Endothelial cell of umbilical vein (primary cell): ENCODE measurements at regions of chr5 and their contacts with region 1.

Region 1: GRCh38 chr5:127011961-127012644 is 18.3 kb downstream of the MARCHF3 start:
- DNase-seq: peak; percentile 43
- H3K4me3 ChIP-seq: no peak overlapping the region
- H3K27ac ChIP-seq: peak overlapping the region; percentile 83
- H3K4me1 ChIP-seq: peaks cover 40% of the 10 kb centered on the region
- H3K27me3 ChIP-seq: no peaks in the 10 kb centered on the region
- CTCF ChIP-seq: no peak
- POLR2A ChIP-seq: no peak

Region 2: GRCh38 chr5:126917918-126918614 is 94.0 kb before region 1 on chr5:
- CTCF ChIA-PET with region 1: no interaction called
- POLR2A ChIA-PET with region 1: no interaction called
- dilution Hi-C with region 1: no loop called
- intact Hi-C with region 1: loop called (anchors 5 kb)
- DNase-seq: peak; percentile 16
- H3K4me3 ChIP-seq: no peak overlapping the region
- H3K27ac ChIP-seq: peak overlapping the region; percentile 5
- H3K4me1 ChIP-seq: peaks cover 21% of the 10 kb centered on the region
- H3K27me3 ChIP-seq: no peaks in the 10 kb centered on the region
- CTCF ChIP-seq: no peak
- POLR2A ChIP-seq: no peak

Region 3: GRCh38 chr5:126972062-126972895 is 39.8 kb before region 1 on chr5:
- CTCF ChIA-PET with region 1: interaction called, 3 read pairs
- POLR2A ChIA-PET with region 1: no interaction called
- dilution Hi-C with region 1: no loop called
- intact Hi-C with region 1: loop called (anchors 1 kb)
- DNase-seq: peak; percentile 42
- H3K4me3 ChIP-seq: no peak overlapping the region
- H3K27ac ChIP-seq: no peak overlapping the region
- H3K4me1 ChIP-seq: peaks cover 27% of the 10 kb centered on the region
- H3K27me3 ChIP-seq: no peaks in the 10 kb centered on the region
- CTCF ChIP-seq: no peak
- POLR2A ChIP-seq: no peak

Region 4: DNA sequence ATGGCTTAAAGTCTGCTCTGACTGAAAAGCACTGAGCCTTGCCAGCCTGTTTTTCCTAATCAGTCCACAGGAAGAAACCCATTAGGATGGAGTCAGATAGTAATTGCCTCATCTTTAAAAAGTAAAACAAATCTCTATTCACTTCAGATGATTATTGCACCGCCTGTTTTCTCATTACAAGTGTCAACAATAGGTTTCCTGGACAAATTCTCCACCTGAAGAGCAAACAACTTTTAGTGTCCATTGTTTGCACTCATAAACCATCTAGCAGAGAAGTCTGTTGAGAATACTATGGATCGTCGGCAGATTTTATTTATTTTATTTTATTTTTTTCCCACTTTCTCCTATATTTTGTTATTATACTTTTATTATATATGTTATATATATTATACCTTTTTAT is 40.9 kb after region 1 on chr5:
- CTCF ChIA-PET with region 1: no interaction called
- POLR2A ChIA-PET with region 1: no interaction called
- dilution Hi-C with region 1: no loop called
- intact Hi-C with region 1: no loop called
- DNase-seq: no peak
- H3K4me3 ChIP-seq: no peak overlapping the region
- H3K27ac ChIP-seq: no peak overlapping the region
- H3K4me1 ChIP-seq: no peaks in the 10 kb centered on the region
- H3K27me3 ChIP-seq: no peaks in the 10 kb centered on the region
- CTCF ChIP-seq: no peak
- POLR2A ChIP-seq: no peak